HEK293T (cell line): ENCODE measurements at regions of chr22 and their contacts with region 1.

Region 1: DNA sequence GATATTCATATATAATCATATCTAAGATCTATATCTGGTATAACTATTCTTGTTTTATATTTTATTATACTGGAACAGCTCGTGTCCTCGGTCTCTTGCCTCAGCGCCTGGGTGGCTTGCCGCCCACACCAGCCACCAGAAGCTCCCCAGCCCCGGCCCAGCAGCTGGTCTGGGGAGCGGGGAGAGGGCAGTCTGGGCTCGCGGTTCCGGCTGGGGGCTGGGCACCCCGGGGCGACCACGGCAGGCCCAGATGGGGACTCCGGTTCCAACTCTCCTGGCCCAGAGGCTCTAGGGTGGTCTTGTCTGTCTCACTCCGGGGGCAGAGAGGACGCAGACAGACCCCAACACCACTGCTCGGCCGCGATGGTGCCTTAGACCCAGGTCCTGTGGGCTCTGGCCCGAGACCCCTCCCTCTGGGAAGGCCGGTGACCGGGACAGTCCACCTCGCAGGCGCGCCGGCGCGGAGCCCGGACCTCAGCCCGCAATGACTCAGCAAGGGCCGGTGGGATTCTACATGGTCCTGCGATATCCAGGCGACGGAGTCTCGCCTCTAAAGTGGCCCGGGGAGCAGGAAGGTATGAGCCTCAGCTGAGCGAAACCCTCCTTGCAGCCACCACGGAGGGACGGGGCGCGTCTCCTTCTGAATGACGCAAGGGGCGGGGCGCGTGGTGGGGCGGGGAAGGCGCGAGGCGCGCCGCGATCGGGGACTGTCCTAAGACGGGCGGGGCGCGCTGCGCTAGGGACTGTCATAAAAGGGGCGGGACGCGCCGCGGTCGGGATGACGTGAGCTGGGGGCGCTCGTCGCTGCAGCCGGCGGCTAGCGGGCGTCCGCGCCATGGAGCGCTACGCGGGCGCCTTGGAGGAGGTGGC is at the start of gene DGCR6:
- DNase-seq: no peak

Region 2: DNA sequence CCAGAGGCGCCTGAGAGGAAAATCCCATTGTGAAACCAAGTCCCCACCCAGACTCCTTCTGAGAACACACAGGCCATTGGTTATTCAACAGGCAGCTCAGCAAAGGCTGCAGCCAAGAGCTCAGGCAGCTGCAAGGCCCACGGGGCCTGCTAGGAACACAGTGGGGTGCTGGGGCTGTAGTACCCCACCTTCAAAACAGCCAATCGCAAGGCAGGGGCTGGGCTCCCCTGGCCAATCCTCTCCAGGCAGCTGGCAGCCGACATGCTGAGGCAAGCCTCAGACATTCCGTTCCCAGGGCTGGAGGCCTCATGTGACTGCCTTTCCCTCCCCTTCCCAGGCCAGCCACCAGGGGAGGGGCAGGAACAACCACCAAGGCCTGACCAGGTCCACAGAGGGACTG is 23.7 kb after region 1 on chr22:
- CTCF ChIA-PET with region 1: interaction called, 6 read pairs
- POLR2A ChIA-PET with region 1: interaction called, 11 read pairs
- DNase-seq: no peak

Region 3: DNA sequence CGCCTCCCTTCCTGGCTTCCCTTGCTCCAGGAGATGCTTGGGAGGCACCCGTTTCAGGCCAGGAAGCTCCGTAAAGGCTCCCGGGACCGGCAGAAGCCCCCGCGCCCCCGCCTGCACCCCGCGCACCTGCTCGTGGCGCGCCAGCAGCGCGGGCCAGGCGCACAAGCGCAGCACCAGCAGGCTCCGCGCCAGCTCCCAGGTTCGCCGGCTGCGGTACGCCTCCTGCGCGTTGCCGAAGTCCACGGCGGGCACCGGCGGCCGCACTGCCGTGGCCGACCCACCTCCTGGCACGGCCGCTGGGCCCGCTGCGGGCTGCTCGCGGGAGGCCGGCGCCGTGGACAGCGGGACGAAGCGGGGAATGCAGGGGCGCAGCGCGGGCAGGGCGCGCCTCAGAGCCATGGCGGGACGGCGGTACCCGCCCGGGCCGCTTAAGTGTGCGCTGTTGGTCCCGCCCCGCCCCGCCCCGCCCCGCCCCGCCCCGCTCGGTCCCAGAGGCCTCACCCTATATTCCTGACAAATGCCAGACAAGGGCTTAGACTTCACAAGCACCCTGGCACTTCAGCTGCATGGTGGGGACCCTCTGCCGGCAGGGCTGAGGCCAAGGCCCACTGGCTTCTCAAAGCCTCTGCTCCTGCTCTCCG is 30.2 kb after region 1 on chr22 and contains the start of gene PRODH:
- CTCF ChIA-PET with region 1: interaction called, 4 read pairs
- POLR2A ChIA-PET with region 1: interaction called, 17 read pairs
- DNase-seq: no peak

Region 4: DNA sequence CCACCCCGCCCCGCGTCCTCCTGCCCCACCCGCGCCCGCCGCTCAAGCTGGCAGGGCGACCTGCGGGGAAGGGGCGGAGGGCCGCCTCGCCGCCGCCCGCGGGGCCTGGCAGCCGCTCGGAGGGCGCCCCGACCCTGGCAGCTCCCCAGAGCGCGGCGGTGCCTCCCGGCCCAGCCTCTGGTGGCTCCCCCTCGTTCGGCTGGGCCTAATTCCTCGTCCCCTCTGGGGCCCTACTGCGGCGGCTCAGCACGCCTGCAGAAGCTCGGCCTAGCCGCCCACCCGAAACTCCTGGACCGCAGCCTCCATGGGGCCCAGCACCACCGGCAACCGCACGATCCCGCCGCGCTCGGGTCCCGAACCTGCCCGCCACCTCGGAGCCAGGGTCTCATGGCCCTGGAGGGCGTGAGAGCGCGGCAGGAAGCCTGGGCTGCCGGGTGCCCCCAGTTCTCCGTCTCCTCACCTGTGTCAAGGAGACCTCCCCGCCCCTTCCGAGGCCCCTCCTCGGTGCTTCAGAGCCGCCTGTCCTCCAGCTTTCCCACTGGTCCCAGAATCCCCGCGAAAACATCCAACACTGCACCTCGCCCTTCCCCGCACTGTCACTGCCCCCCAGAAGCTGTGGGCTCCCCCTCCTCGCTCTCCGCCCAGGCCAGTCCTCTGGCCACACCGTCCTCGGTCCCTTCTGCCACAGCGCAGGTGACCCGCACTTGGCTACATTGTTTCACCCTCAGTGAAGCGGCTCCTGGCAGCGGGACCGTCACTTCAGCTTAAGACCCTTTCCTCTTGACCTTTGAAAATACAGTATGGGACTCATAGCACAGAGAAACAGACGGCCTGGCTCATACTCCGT is 244.9 kb after region 1 on chr22:
- CTCF ChIA-PET with region 1: no interaction called
- POLR2A ChIA-PET with region 1: no interaction called
- DNase-seq: no peak